Lower leg skin (tissue), 4 donors: ENCODE measurements at regions of chr14 and their contacts with region 1.

Region 1: DNA sequence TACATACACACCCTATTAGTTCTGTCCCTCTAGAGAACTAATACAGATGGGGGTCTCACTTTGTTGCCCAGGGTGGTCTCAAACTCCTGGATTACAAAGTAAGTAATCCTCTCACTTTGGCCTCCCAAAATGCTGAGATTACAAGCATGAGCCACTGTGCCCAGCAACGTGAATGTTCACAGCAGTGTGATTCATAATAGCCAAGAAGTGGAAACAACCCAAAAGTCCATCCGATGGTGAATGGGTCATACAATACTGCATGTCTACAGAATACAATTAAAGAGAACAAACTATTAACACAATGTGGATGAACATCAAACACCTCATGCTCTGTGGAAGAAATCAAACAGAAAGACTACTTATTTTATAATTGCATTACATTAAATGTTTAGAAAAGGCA is 57.3 kb upstream of the SYNE2 start:
- DNase-seq: no peak
- H3K4me3 ChIP-seq: no peak overlapping the region
- CTCF ChIP-seq: no peak
- POLR2A ChIP-seq: no peak

Region 2: GRCh38 chr14:63212209-63212608 is 583.3 kb before region 1 on chr14:
- intact Hi-C with region 1: no loop called
- DNase-seq: no peak
- H3K4me3 ChIP-seq: no peak overlapping the region
- CTCF ChIP-seq: no peak
- POLR2A ChIP-seq: no peak

Region 3: DNA sequence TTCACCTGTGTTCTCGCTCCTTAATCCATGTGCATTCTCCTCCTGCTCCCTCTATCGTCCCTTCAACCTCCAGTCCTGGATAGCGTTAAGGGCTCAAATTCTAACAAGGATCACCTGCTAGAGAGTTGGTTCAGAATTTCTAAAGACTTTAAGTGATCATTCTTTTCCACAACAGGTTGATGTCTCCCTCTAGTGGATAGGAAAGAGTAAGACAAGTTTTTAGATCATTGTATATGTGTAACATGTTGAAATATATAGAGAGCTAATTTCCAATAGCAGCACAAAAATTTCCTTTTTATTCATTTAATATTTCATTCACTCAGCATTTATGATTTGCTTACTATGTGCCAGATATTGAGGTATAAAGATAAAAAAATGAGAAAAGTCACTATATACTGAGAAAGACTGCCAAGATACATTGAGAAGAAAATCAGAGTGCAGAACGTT is 508.0 kb after region 1 on chr14:
- intact Hi-C with region 1: loop called (anchors 10 kb)
- DNase-seq: no peak
- H3K4me3 ChIP-seq: no peak overlapping the region
- CTCF ChIP-seq: no peak
- POLR2A ChIP-seq: no peak